ENCODE measurements at regions of chr2 and their contacts with region 1.

Region 1: DNA sequence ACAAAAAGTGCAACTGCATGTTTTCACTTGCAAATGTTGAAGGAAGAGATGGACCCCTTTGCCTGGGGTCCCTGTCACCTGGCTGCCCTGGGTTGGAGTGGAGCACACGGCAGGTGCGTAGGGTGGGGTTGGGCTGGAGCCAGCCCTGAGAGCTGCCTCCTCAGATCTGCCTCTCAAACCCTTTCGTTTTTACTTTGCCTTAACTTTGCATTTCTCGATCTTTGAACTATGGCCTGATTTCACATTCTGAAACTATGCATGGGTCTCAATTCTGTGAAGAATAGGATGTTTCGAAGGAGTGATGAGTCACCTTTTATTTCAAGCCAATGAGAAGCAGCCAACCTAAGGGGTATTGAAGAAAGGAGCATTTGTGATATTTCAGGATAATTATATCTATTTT is 132.8 kb downstream of the ACOXL start:
- DNase-seq: peak; percentile 47
- H3K4me3 Mint-ChIP-seq: no peak overlapping the region
- H3K27ac Mint-ChIP-seq: no peak overlapping the region
- H3K4me1 Mint-ChIP-seq: peaks cover 35% of the 10 kb centered on the region
- H3K27me3 Mint-ChIP-seq: peaks cover 51% of the 10 kb centered on the region

Region 2: GRCh38 chr2:110748489-110748867 is 116.7 kb before region 1 on chr2:
- CTCF ChIA-PET with region 1: no interaction called
- intact Hi-C with region 1: loop called (anchors 1 kb)
- DNase-seq: peak; percentile 83
- H3K4me3 Mint-ChIP-seq: no peak overlapping the region
- H3K27ac Mint-ChIP-seq: no peak overlapping the region
- H3K4me1 Mint-ChIP-seq: peaks cover 17% of the 10 kb centered on the region
- H3K27me3 Mint-ChIP-seq: peaks cover 70% of the 10 kb centered on the region

Region 3: GRCh38 chr2:110843959-110844510 is 21.2 kb before region 1 on chr2:
- CTCF ChIA-PET with region 1: interaction called, 3 read pairs
- intact Hi-C with region 1: loop called (anchors 2 kb)
- DNase-seq: peak; percentile 24
- H3K4me3 Mint-ChIP-seq: no peak overlapping the region
- H3K27ac Mint-ChIP-seq: no peak overlapping the region
- H3K4me1 Mint-ChIP-seq: peaks cover 55% of the 10 kb centered on the region
- H3K27me3 Mint-ChIP-seq: peaks cover 29% of the 10 kb centered on the region

Region 4: DNA sequence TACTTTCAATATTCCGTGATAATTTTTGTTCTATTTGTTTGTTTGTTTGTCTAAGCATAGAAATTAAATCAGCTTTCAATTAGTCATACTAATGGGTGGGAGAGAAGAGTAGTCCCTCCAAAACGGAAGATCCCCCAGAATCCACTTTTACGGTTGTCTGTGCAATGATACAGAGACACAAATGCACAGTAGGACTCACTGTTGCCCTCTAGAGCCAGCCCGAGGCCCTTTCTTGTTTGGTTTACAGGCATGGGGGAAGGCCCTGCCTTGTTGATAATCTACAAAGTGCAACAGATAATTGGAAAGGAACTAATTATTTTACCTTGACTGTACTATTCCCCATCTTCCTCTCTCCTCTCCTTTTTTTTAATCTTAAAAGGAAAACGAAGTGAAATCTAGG is 11.7 kb before region 1 on chr2:
- CTCF ChIA-PET with region 1: interaction called, 11 read pairs
- intact Hi-C with region 1: no loop called
- DNase-seq: peak; percentile 78
- H3K4me3 Mint-ChIP-seq: no peak overlapping the region
- H3K27ac Mint-ChIP-seq: no peak overlapping the region
- H3K4me1 Mint-ChIP-seq: peaks cover 36% of the 10 kb centered on the region
- H3K27me3 Mint-ChIP-seq: peaks cover 44% of the 10 kb centered on the region

Region 5: DNA sequence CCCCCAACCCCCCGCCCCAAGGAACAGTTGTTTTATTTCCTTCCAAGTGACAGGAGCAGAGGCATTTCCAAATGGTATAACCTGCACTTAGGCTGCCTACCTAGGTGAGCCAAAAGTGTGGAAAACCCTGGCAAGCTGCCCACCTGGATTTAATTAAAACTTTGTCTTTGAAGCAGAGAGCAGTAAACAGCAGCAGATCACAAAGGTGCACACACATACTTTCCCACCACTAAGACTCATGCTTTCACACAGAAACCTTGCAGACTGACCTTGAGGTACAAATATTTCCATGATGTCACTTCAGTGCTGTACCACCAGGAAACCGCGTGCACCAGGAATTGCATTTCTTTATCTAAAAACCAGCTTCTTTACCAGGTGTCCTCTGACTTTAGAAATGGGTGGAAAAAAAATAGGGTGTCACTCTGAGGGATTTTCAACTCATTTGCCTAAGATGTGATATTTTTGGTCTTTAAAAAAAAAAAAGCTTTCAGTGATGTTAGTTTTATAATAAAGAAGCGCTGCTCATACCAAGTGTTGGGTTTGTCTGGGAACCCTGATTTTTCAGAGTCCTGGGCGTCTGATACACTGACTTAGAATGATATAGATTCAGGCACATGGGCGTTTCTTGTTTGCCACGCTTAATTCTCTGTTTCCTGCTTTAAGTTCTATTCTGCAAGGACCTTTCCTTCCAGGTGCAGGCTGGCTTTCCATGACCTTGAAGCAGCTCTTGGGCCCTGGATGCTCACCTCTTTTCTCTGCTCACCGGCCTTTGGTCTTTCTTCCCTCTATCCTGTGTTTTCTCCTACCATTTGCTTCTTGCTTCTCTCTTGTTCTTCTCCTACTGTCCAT is 184.8 kb after region 1 on chr2:
- CTCF ChIA-PET with region 1: interaction called, 3 read pairs
- intact Hi-C with region 1: loop called (anchors 5 kb)
- DNase-seq: peak; percentile 42
- H3K4me3 Mint-ChIP-seq: no peak overlapping the region
- H3K27ac Mint-ChIP-seq: peak overlapping the region; percentile 16
- H3K4me1 Mint-ChIP-seq: peaks cover 31% of the 10 kb centered on the region
- H3K27me3 Mint-ChIP-seq: peaks cover 40% of the 10 kb centered on the region

Region 6: DNA sequence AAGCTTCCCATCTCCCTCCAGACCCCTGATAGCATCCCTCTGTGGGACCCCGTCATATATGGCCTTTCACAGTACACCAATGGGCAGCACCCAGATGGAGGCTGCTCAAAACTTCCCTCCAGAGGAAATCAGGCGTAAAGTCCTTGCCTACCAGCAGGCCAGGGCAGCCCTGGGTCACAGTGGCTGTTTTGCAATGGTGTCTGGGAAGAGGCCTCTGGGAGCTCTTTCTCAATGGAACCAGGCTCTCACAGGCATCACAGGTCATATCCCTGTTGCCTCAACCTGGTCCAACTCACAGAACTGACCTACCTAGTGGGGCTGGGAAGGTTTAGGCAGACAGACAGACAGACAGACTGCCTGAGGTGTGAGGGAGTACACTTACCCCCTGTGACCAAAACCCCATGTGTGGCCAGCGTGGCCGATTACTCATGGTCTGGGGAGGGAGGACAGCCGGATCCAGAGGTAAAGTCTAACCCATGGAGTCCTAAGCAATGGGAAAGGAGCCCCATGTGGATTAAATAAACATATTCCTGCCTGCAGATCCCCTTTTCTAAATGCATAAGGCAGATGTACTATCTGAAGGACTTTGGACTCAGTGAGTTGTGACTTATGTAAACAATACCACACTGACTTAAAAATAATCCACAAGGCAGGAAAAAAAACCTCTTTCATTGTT is 313.7 kb after region 1 on chr2:
- CTCF ChIA-PET with region 1: no interaction called
- intact Hi-C with region 1: no loop called
- DNase-seq: no peak
- H3K4me3 Mint-ChIP-seq: no peak overlapping the region
- H3K27ac Mint-ChIP-seq: no peak overlapping the region
- H3K4me1 Mint-ChIP-seq: no peaks in the 10 kb centered on the region
- H3K27me3 Mint-ChIP-seq: no peaks in the 10 kb centered on the region